H1 (cell line): ENCODE measurements at regions of chr5 and their contacts with region 1.

Region 1: GRCh38 chr5:138725138-138725833 is 27.9 kb upstream of the CTNNA1 start:
- DNase-seq: peak; percentile 73 to 81
- H3K4me3 ChIP-seq: no peak overlapping the region; a peak in 1 of 8 replicates
- H3K27ac ChIP-seq: peak overlapping the region; percentile 56
- H3K4me1 ChIP-seq: peaks cover 13 to 26% (median 20%) of the 10 kb centered on the region in 4 experiments
- H3K27me3 ChIP-seq: no peaks in the 10 kb centered on the region
- CTCF ChIP-seq: peak; percentile 56 to 78 (median 56)
- EP300 ChIP-seq: peak in 1 of 2 experiments; percentile 53; a peak in 1 of 3 replicates
- POLR2A ChIP-seq: peak in 1 of 2 experiments; percentile 51; a peak in 1 of 3 replicates
- RAD21 ChIP-seq: peak; percentile 51 to 70

Region 2: GRCh38 chr5:138752951-138753793 is 27.9 kb after region 1 on chr5 and contains the start of gene CTNNA1:
- CTCF ChIA-PET with region 1: no interaction called
- POLR2A ChIA-PET with region 1: interaction called, 12 read pairs
- DNase-seq: peak in 1 of 2 experiments; percentile 96
- H3K4me3 ChIP-seq: peak within 1 kb of the TSS; percentile 74 to 91 (median 82)
- H3K27ac ChIP-seq: peak within 1 kb of the TSS; percentile 85
- H3K4me1 ChIP-seq: peaks cover 2 to 11% (median 9%) of the 10 kb centered on the region in 4 experiments; a peak in 5 of 7 replicates
- H3K27me3 ChIP-seq: no peaks in the 10 kb centered on the region
- CTCF ChIP-seq: no peak
- EP300 ChIP-seq: peak in 1 of 2 experiments; percentile 99; a peak in 2 of 3 replicates
- POLR2A ChIP-seq: peak; percentile 87 to 89
- RAD21 ChIP-seq: no peak
- total RNA-seq, gene CTNNA1: 302 and 349 TPM in 2 replicates